Heart left ventricle (tissue), 16 donors: ENCODE measurements at regions of chr2 and their contacts with region 1.

Region 1: GRCh38 chr2:55268907-55269644 is at the start of gene MTIF2:
- DNase-seq: peak; percentile 95 to 97 (median 97)
- ATAC-seq: peak; percentile 99 to 100 (median 100)
- H3K4me3 ChIP-seq: peak within 1 kb of the TSS; percentile 54 to 93 (median 74)
- H3K27ac ChIP-seq: peak within 1 kb of the TSS; percentile 77 to 93 (median 88)
- H3K4me1 ChIP-seq: peaks cover 0 to 20% (median 12%) of the 10 kb centered on the region in 12 donors
- H3K27me3 ChIP-seq: no peaks in the 10 kb centered on the region
- CTCF ChIP-seq: peak in 3 of 12 donors; percentile 13 to 39 (median 39)
- POLR2A ChIP-seq: peak in 1 of 2 donors; percentile 52
- total RNA-seq, gene MTIF2: 38.3 to 54.7 (median 45.5) TPM

Region 2: GRCh38 chr2:55204950-55205349 is 64.1 kb before region 1 on chr2:
- intact Hi-C with region 1: no loop called
- DNase-seq: no peak
- ATAC-seq: no peak
- H3K4me3 ChIP-seq: no peak overlapping the region
- H3K27ac ChIP-seq: no peak overlapping the region
- H3K4me1 ChIP-seq: no peaks in the 10 kb centered on the region
- H3K27me3 ChIP-seq: no peaks in the 10 kb centered on the region
- CTCF ChIP-seq: no peak
- POLR2A ChIP-seq: no peak

Region 3: DNA sequence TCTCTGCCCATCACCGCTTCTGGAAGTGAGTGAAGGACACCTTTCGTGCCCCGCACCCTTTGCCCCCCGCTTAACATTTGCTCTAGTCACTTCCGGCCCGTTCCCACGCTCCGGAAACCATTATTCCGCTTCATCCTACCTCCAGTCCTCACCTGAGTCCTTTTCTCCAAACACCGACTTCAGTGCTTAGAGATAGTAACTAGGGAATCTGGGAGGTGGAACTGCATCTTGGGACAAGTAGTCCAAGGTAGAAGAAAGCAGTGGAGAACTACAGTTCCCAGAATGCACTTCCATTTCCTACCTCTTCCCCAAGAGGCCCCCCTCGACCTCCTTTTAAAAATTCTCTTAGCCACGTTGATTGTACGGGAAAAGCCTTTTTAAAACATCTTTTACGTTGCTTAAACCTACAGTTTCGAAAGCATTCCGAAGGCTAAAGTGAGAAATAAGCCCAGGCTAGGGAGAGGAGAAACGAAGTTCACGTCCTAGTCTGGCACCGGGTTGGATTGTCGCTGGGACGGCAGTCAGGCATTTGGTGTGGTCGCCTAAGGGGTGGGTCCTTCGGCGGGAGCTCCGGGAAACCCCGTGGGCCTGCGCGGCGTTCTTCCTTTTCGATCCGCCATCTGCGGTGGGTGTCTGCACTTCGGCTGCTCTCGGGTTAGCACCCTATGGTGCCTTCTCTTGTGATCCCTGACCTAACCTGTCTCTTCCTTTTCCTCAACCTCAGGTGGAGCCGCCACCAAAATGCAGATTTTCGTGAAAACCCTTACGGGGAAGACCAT is 36.8 kb before region 1 on chr2 and contains the starts of genes CLHC1 and RPS27A:
- intact Hi-C with region 1: loop called in 5 of 10 experiments (anchors 2 to 5 kb)
- DNase-seq: peak; percentile 91 to 95 (median 93)
- ATAC-seq: peak; percentile 94 to 97 (median 96)
- H3K4me3 ChIP-seq: peak within 1 kb of the TSS; percentile 73 to 96 (median 86)
- H3K27ac ChIP-seq: peak within 1 kb of the TSS; percentile 84 to 98 (median 92)
- H3K4me1 ChIP-seq: peaks cover 0 to 47% (median 17%) of the 10 kb centered on the region in 12 donors
- H3K27me3 ChIP-seq: no peaks in the 10 kb centered on the region
- CTCF ChIP-seq: no peak
- POLR2A ChIP-seq: peak in 1 of 2 donors; percentile 72
- total RNA-seq, gene CLHC1: 2.3 to 10.6 (median 5.6) TPM
- total RNA-seq, gene RPS27A: 329 to 749 (median 488) TPM

Region 4: DNA sequence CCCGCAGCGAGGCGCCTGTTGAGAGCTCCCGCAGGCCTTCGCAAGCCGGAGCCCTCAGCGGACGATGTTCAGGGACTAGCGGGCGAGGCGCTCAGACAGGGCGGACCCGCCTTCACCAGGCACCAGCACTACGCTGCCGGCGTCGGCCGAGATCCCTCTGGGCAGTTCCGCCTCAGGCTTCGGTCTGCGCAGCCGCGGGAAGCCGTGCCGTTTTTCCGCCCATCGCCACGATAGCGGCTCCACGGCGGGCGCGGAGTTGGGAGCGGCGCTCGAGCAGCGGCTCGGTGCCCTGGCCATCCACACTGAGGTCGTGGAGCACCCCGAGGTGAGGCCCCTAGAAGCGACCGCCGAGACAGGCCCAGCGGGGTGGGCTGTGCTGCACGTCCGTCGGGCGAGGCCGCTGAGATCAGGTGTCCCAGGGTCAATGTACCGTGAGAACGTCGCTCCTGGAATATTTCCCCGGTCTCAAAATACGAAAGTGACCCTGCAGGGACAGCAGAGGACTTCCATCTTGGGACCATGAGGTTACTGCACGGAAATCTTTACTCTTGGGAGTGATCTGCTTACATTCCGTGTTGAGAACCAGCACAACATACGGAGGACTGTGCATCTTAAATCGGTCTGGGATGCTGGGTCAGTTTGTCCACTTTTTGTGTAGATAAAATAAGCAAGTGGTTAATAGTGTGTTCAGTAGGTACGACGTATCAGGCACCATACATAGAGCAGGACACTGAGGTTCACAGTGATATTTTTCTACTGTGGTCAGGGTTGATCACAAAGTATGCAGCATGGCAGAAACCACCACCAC is 13.2 kb after region 1 on chr2:
- intact Hi-C with region 1: loop called in 2 of 10 experiments (anchors 1 to 2 kb)
- DNase-seq: peak; percentile 88 to 97 (median 95)
- ATAC-seq: peak; percentile 91 to 98 (median 98)
- H3K4me3 ChIP-seq: peak overlapping the region; percentile 43 to 96 (median 77)
- H3K27ac ChIP-seq: peak overlapping the region; percentile 83 to 98 (median 92)
- H3K4me1 ChIP-seq: peaks cover 0 to 25% (median 14%) of the 10 kb centered on the region in 12 donors
- H3K27me3 ChIP-seq: no peaks in the 10 kb centered on the region
- CTCF ChIP-seq: peak in 1 of 12 donors; percentile 15
- POLR2A ChIP-seq: peak in 1 of 2 donors; percentile 80

Region 5: DNA sequence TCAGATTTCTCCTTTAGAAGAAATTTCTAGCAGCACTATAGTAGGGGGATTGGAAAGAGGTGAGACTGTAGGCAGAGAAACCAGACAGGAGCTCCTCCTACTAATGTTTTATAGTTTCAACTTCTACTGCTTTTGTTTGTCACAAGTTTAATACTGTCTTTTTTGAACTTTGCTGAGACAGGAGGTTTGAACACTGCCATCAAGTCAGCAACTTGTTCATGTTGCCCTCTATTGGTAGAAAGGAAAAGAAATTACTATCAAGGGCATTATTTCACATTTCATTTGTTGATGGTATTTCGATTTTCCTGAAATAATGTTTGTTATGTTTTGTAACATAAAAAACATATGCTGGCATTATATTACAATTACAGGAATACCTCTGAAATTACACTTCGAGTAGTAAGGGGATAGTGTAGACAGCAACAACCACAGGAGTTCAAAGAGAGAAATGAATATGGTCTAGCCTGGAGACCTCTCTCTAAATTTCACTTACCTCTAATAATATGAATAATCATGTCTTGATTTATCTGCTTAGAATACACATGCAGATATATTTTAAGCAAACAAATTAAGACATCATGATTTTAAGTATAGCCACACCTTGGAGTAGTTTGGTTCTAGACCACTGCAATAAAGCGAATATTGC is 163.0 kb after region 1 on chr2:
- intact Hi-C with region 1: loop called in 2 of 10 experiments (anchors 5 to 10 kb)
- DNase-seq: no peak
- ATAC-seq: peak in 1 of 4 donors; percentile 58
- H3K4me3 ChIP-seq: no peak overlapping the region
- H3K27ac ChIP-seq: no peak overlapping the region
- H3K4me1 ChIP-seq: peaks cover 0 to 4% (median 0%) of the 10 kb centered on the region in 12 donors
- H3K27me3 ChIP-seq: no peaks in the 10 kb centered on the region
- CTCF ChIP-seq: peak in 11 of 12 donors; percentile 35 to 72 (median 61)
- POLR2A ChIP-seq: no peak

Region 6: DNA sequence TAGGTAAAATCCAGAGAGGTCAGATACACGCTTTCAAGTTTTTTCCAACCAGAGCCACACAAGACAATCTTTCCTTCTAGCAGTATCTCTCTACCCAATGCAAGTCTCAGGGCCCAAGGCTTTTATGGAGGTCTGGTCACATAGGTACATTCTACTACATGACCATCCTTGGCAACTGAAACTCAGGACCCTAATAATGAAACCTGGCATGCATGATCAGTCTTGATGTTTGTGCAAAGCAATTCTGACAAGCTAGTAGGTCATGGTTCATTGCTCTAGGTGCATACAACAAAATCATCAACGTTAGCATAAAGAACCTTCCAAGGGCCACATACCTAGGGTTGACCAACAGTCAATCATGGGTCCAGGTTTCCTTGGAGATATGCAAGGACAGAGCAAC is 183.8 kb after region 1 on chr2:
- intact Hi-C with region 1: no loop called
- DNase-seq: no peak
- ATAC-seq: no peak
- H3K4me3 ChIP-seq: no peak overlapping the region
- H3K27ac ChIP-seq: no peak overlapping the region
- H3K4me1 ChIP-seq: no peaks in the 10 kb centered on the region
- H3K27me3 ChIP-seq: no peaks in the 10 kb centered on the region
- CTCF ChIP-seq: no peak
- POLR2A ChIP-seq: no peak